IMR-90 (cell line): ENCODE measurements at regions of chr2 and their contacts with region 1.

Region 1: GRCh38 chr2:96868555-96869280 is 1.2 kb downstream of the SEMA4C start:
- DNase-seq: peak; percentile 91
- ATAC-seq: peak; percentile 78
- H3K4me3 ChIP-seq: peak overlapping the region; percentile 87
- H3K27ac ChIP-seq: peak overlapping the region; percentile 88
- H3K4me1 ChIP-seq: peaks cover 7% of the 10 kb centered on the region; the same call in 1 of the 2 replicates
- H3K27me3 ChIP-seq: no peaks in the 10 kb centered on the region
- CTCF ChIP-seq: peak; percentile 59
- POLR2A ChIP-seq: peak; percentile 70; the same call in 1 of the 2 replicates
- RAD21 ChIP-seq: peak; percentile 26

Region 2: DNA sequence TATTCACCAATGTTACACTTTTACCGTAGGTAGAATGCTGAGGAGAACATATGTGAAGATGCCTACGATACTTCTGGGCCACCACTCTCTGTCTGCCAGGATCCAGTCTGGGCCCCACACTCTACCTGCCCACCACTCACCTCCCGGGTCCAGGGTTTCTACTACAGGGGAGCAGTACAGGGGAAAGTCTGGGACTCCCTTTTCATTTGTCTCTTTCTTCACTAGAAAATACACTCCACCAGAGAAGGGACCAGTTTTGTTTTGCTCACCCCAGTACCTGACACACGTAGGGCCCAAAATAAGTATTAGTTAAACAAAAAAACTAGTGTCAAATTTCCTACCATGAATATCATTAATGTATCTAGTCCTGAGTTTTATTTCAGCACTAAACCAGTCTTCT is 251.7 kb before region 1 on chr2:
- CTCF ChIA-PET with region 1: no interaction called
- POLR2A ChIA-PET with region 1: no interaction called
- dilution Hi-C with region 1: no loop called
- in situ Hi-C with region 1: no loop called
- intact Hi-C with region 1: no loop called
- DNase-seq: no peak
- ATAC-seq: no peak
- H3K4me3 ChIP-seq: no peak overlapping the region
- H3K27ac ChIP-seq: no peak overlapping the region
- H3K4me1 ChIP-seq: peaks cover 4% of the 10 kb centered on the region; the same call in 1 of the 2 replicates
- H3K27me3 ChIP-seq: no peaks in the 10 kb centered on the region
- CTCF ChIP-seq: no peak
- POLR2A ChIP-seq: no peak
- RAD21 ChIP-seq: no peak

Region 3: DNA sequence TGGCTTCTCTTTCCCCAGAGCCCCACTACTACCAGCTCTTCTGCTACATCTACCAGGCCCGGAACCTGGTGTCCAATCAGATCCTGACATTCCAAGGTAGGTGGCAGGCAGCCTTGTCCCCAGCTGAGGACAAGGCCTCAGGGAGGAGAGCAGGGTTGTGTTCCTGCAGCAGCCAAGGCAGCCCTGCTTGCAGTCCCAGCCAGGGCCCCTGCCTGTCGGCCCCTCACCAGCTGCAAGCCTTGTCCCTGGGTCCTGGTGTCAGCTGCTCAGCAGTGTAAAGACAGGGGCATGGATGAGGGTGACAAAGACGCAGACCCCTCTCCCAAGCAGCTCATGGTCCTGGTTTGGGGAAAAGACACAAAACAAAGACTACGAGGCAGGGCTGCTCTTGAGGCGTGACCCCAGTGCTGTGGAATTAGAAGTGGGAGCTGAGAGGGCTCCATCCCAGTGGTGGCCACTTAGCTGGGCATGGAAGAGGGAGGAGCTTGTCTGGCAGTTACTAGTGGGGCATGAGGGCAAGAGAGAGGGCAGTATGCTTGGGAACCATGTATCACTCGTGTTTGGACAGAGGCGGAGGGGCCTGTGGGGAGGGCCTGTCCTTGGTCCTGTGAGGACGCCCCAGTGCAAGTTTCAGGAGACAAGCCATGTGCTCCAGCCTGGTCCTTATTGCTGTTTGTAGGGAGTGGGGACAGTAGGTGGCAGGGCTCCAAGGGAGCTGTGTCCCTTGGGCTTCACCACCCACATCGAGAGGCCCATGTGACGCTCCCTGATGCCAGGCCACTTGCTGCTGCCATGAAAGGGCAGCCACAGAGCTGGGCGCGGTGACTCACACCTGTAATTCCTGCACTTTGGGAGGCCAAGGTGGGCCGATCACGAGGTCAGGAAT is 176.4 kb before region 1 on chr2:
- CTCF ChIA-PET with region 1: no interaction called
- POLR2A ChIA-PET with region 1: no interaction called
- dilution Hi-C with region 1: no loop called
- in situ Hi-C with region 1: no loop called
- intact Hi-C with region 1: no loop called
- DNase-seq: no peak
- ATAC-seq: no peak
- H3K4me3 ChIP-seq: no peak overlapping the region
- H3K27ac ChIP-seq: no peak overlapping the region
- H3K4me1 ChIP-seq: no peaks in the 10 kb centered on the region
- H3K27me3 ChIP-seq: no peaks in the 10 kb centered on the region
- CTCF ChIP-seq: no peak
- POLR2A ChIP-seq: no peak
- RAD21 ChIP-seq: no peak

Region 4: GRCh38 chr2:96788442-96789244 is 80.1 kb before region 1 on chr2:
- CTCF ChIA-PET with region 1: no interaction called
- POLR2A ChIA-PET with region 1: no interaction called
- dilution Hi-C with region 1: no loop called
- in situ Hi-C with region 1: no loop called
- intact Hi-C with region 1: no loop called
- DNase-seq: peak; percentile 15
- ATAC-seq: peak; percentile 40
- H3K4me3 ChIP-seq: no peak overlapping the region
- H3K27ac ChIP-seq: no peak overlapping the region
- H3K4me1 ChIP-seq: peaks cover 6% of the 10 kb centered on the region
- H3K27me3 ChIP-seq: no peaks in the 10 kb centered on the region
- CTCF ChIP-seq: no peak
- POLR2A ChIP-seq: no peak
- RAD21 ChIP-seq: no peak

Region 5: DNA sequence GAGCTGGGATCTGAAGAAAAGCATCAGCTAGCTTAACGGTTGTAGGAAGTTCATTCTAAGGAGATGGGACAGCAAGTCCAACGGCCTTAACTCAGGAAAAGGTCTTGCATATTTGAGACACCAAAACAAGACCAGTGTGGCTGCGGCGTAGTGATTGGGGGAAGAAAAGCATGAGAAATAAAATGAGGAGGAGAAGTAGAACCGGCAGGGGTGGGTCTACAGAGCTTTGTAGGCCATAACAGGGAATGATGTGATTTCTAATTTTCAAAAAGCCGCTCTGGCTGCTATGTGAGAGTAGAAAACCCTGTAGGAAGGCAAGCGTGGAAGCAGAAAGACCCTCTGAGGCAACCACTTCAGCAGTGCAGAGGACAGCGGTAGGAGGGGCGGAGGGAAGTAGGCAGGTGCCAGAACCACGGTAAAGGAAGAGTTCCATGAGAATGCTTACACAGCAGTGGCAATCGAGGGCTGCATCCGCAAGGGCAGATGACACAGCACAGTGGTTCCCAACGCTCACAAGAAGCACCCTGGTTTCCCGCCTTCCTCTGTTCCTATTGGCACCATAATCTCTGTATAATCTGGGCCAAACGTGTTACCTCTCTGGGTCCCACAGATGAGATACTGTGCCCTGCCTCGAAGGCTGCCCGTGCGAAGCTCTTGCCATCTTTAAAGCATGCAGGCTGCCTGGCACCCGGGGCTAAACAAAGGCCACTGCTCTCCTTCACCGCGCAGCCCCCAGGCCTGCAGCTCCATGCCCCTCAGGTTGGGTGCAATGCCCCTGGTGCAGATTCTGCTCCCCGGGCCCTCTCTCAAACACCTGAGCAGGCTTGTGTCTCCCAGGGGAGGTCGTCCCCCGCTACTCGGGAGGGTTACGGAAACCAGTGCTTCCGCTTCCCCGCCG is 11.7 kb before region 1 on chr2:
- CTCF ChIA-PET with region 1: interaction called, 20 read pairs
- POLR2A ChIA-PET with region 1: no interaction called
- dilution Hi-C with region 1: no loop called
- in situ Hi-C with region 1: no loop called
- intact Hi-C with region 1: loop called (anchors 1 kb)
- DNase-seq: no peak
- ATAC-seq: no peak; the same call in 1 of the 2 replicates
- H3K4me3 ChIP-seq: peak overlapping the region; percentile 60
- H3K27ac ChIP-seq: peak overlapping the region; percentile 58; the same call in 1 of the 2 replicates
- H3K4me1 ChIP-seq: peaks cover 12% of the 10 kb centered on the region
- H3K27me3 ChIP-seq: no peaks in the 10 kb centered on the region
- CTCF ChIP-seq: no peak
- POLR2A ChIP-seq: no peak
- RAD21 ChIP-seq: no peak

Region 6: GRCh38 chr2:96951093-96951654 is 82.5 kb after region 1 on chr2:
- CTCF ChIA-PET with region 1: interaction called, 9 read pairs
- POLR2A ChIA-PET with region 1: no interaction called
- dilution Hi-C with region 1: no loop called
- in situ Hi-C with region 1: no loop called
- intact Hi-C with region 1: loop called (anchors 1 kb)
- DNase-seq: peak; percentile 41
- ATAC-seq: peak; percentile 80
- H3K4me3 ChIP-seq: no peak overlapping the region
- H3K27ac ChIP-seq: no peak overlapping the region
- H3K4me1 ChIP-seq: peaks cover 11% of the 10 kb centered on the region
- H3K27me3 ChIP-seq: peaks cover 21% of the 10 kb centered on the region; the same call in 1 of the 2 replicates
- CTCF ChIP-seq: peak; percentile 72
- POLR2A ChIP-seq: no peak
- RAD21 ChIP-seq: peak; percentile 78

Region 7: GRCh38 chr2:97095661-97096060 is 226.9 kb after region 1 on chr2:
- CTCF ChIA-PET with region 1: no interaction called
- POLR2A ChIA-PET with region 1: no interaction called
- dilution Hi-C with region 1: no loop called
- in situ Hi-C with region 1: loop called (anchors 25 kb)
- intact Hi-C with region 1: no loop called
- DNase-seq: no peak
- ATAC-seq: no peak
- H3K4me3 ChIP-seq: no peak overlapping the region
- H3K27ac ChIP-seq: no peak overlapping the region
- H3K4me1 ChIP-seq: peaks cover 4% of the 10 kb centered on the region; the same call in 1 of the 2 replicates
- H3K27me3 ChIP-seq: peaks cover 4% of the 10 kb centered on the region; the same call in 1 of the 2 replicates
- CTCF ChIP-seq: no peak
- POLR2A ChIP-seq: no peak
- RAD21 ChIP-seq: no peak